Ovary (tissue), 10 donors: ENCODE measurements at regions of chr13 and their contacts with region 1.

Region 1: DNA sequence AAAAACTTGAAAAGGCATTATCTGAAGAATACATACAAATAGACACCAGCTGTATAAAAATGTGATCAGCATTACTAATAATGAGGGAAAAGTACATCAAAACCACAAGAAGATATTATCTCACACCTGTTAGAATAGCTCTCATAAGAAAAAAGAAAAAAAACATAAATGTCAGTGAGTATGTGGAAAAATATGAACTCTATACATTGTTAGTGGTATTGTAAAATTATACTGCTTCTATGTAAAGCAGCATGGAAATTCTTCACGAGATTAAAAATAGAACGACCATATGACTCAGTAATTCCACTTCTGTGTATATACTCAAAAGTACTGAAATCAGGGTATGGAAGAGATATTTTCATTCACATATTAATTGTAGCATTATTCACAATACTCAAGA is 1146.4 kb downstream of the SLITRK5 start:
- DNase-seq: no peak
- H3K4me3 ChIP-seq: no peak overlapping the region
- H3K27ac ChIP-seq: no peak overlapping the region
- H3K4me1 ChIP-seq: no peaks in the 10 kb centered on the region
- H3K27me3 ChIP-seq: no peaks in the 10 kb centered on the region
- CTCF ChIP-seq: no peak
- EP300 ChIP-seq: no peak
- POLR2A ChIP-seq: no peak

Region 2: DNA sequence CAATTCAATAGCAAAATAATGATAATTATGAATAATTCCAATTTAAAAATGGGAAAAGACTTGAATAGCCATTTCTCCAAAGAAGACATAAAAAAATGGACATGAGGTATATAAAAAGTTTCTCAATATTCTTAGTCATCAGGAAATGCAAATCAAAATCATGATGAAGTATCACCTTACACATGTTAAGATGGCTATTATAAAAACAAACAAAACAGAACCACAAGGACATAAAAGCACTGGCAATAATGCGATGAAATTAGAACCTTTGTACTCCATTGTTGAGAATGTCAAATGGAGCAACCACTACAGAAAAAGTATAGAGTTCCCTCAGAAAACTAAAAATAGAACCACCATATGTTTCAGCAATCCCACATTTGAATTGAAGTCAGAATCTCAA is 39.7 kb after region 1 on chr13:
- intact Hi-C with region 1: loop called in 1 of 4 experiments (anchors 1 kb)
- DNase-seq: no peak
- H3K4me3 ChIP-seq: no peak overlapping the region
- H3K27ac ChIP-seq: no peak overlapping the region
- H3K4me1 ChIP-seq: no peaks in the 10 kb centered on the region
- H3K27me3 ChIP-seq: no peaks in the 10 kb centered on the region
- CTCF ChIP-seq: no peak
- EP300 ChIP-seq: no peak
- POLR2A ChIP-seq: no peak